ENCODE measurements at regions of chr11 and their contacts with region 1.

Region 1: GRCh38 chr11:77381729-77382685 is 80.5 kb upstream of the GDPD4 start:
- DNase-seq: no peak
- CTCF ChIP-seq: no peak

Region 2: DNA sequence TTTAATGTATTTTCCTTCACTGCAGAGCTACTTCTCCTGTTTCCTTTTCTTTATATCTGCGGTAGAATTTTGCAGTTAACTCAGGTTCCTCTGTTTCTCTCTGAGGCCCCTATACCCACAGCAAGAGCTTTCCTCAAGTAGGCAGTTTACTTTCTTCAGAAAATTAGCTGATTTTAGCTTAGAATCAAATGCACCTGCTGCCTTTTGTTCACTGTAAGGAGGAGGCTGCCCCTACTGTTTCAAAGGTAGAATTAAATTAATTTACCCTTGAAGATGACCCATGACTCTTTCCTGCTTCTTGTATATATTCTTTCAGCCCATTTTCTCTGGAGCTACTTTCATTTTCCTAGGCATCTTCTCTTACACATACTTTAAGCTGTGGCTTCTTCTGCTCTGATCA is 11.8 kb before region 1 on chr11:
- CTCF ChIA-PET with region 1: interaction called, 11 read pairs
- POLR2A ChIA-PET with region 1: no interaction called
- DNase-seq: no peak
- CTCF ChIP-seq: no peak

Region 3: GRCh38 chr11:77479746-77480352 is 97.8 kb after region 1 on chr11:
- CTCF ChIA-PET with region 1: no interaction called
- POLR2A ChIA-PET with region 1: no interaction called
- DNase-seq: no peak
- CTCF ChIP-seq: no peak

Measured in GM10248 (cell line).